ENCODE measurements at regions of chr3 and their contacts with region 1.

Region 1: DNA sequence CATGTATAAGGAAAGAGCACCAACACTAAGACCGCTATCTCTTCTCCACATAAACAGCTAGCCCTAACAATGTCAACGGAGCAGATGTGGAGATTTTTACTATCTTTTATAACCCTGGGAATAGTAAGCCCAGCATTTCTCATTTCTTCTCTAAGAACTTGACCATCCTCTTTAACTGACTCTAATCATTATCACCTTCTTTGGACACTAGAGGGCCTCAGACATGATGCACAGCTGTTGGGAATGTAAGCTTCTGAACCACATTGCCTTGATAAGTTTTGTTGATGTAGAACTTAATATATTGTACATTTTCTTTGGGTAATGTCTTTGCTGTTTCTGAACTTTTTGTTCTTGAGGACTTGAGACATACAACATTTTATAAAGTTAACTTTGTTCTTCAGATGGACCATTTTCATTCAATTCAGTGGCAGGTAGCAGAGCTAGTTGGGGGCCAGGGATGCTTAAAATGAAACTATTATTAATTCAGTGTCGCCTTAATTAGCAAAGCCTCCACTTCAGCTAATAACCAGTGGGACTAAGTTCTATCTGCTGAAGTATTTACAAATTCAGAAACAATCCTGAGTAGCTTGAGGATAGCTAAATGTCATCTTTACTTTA is 9.6 kb upstream of the TAGLN3 start:
- DNase-seq: no peak
- ATAC-seq: peak in 3 of 4 donors; percentile 66 to 84 (median 70)
- H3K4me3 ChIP-seq: no peak overlapping the region
- H3K27ac ChIP-seq: no peak overlapping the region
- H3K4me1 ChIP-seq: no peaks in the 10 kb centered on the region
- H3K27me3 ChIP-seq: no peaks in the 10 kb centered on the region
- CTCF ChIP-seq: peak; percentile 71

Region 2: DNA sequence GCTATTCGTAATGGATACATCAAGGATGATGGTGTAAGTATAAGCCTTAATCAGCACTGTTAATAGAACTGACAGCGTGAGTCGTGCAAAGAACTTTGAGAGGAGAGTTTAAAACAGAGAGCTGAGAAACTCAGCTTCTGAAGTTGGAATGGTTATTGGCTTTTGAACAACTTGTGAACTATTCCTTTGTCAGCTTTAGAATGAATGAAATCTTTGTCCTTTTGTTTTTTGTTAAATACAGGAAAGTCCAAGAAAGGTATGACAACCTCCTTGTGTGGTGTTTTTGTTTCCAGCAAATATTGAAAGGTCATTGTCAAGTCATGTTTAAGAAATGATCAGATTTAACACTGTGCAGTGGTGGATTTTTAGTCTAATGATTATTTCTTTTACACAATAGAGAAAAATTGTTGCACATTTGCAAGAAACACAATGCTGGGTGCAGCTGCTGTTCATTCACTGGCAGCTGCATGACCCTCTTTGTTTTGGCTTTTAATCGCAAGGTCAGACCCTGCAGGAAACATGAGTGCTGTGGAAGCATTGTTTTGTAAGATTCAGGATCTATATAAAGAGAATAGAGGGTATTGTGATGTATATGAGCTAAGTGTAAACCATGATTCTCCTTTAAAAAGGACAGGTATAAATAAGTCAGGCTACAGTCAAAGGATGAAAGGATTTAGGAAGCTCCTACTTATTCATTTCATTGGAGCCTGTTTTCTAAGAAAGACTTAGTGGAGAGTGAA is 32.0 kb before region 1 on chr3:
- intact Hi-C with region 1: no loop called
- DNase-seq: no peak
- ATAC-seq: no peak
- H3K4me3 ChIP-seq: no peak overlapping the region
- H3K27ac ChIP-seq: no peak overlapping the region
- H3K4me1 ChIP-seq: no peaks in the 10 kb centered on the region
- H3K27me3 ChIP-seq: no peaks in the 10 kb centered on the region
- CTCF ChIP-seq: no peak

Region 3: GRCh38 chr3:112013058-112013783 is 24.1 kb after region 1 on chr3:
- intact Hi-C with region 1: loop called in 1 of 2 experiments (anchors 2 kb)
- DNase-seq: peak; percentile 51 to 79
- ATAC-seq: peak; percentile 78 to 97 (median 87)
- H3K4me3 ChIP-seq: peak overlapping the region; percentile 13
- H3K27ac ChIP-seq: no peak overlapping the region
- H3K4me1 ChIP-seq: no peaks in the 10 kb centered on the region
- H3K27me3 ChIP-seq: no peaks in the 10 kb centered on the region
- CTCF ChIP-seq: peak; percentile 68

Region 4: DNA sequence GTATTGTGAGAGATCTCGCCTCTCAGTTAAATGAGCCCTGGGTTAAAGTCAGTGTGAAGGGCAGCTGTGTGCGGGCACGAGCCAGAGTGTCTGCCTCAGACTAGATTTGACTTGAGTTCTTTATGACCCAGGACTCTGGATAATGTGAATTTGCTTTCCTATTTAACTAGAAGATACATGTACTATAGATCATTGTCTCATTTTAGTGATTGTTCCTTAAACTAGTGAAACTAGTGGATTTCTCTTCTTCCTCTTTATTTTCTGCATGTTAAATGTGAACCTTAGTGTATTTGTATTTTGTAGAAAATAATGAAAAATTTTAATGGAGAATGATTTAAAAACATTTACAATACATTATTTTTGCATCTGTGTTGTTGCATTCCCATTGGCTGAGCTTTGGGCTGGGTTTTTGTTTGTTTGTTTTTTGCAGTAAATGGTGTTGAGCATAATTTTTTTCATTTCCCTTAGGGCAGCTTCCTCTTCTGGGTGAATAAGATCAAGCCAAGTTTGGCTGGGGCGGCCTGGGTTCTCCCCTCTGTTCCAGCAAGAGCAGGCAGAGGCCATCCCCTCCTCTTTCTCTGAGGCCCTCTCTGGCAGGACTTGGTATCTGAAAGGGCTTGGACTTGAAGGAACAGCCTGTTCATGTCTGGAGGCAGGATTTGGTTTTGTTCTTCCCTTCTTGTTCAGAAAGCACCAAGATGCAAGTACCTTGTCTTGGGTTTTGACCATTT is 128.8 kb after region 1 on chr3:
- intact Hi-C with region 1: no loop called
- DNase-seq: no peak
- ATAC-seq: no peak
- H3K4me3 ChIP-seq: no peak overlapping the region
- H3K27ac ChIP-seq: no peak overlapping the region
- H3K4me1 ChIP-seq: no peaks in the 10 kb centered on the region
- H3K27me3 ChIP-seq: no peaks in the 10 kb centered on the region
- CTCF ChIP-seq: no peak

Measured in psoas muscle (tissue), 8 donors.